SK-N-SH (cell line): ENCODE measurements at regions of chr1 and their contacts with region 1.

Region 1: GRCh38 chr1:165914136-165914798 is 86.9 kb downstream of the UCK2 start:
- DNase-seq: peak; percentile 70
- H3K4me3 ChIP-seq: no peak overlapping the region; a peak in 1 of 4 replicates
- H3K27ac ChIP-seq: no peak overlapping the region
- H3K4me1 ChIP-seq: no peaks in the 10 kb centered on the region
- H3K27me3 ChIP-seq: no peaks in the 10 kb centered on the region
- CTCF ChIP-seq: peak; percentile 97
- EP300 ChIP-seq: no peak
- RAD21 ChIP-seq: peak; percentile 99

Region 2: DNA sequence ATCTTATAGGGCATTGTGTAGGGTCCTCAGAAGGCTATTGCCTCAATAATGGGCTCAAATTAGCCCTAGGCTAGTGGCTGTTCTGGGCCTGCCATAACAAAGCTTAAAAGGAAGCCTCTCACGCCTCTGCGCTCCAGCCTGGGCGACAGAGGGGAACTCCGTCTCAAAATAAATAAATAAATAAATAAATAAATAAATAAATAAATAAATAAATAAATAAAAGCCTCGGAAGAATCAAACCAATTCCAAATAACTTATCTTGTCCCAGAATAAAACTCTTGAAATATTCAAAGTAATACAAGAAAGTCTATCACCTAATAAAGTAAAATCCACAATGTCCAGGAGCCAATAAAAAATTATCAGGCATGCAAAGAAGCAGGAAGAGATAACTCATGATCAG is 201.5 kb before region 1 on chr1:
- CTCF ChIA-PET with region 1: interaction called, 49 read pairs
- POLR2A ChIA-PET with region 1: no interaction called
- DNase-seq: no peak
- H3K4me3 ChIP-seq: no peak overlapping the region
- H3K27ac ChIP-seq: no peak overlapping the region
- H3K4me1 ChIP-seq: no peaks in the 10 kb centered on the region
- H3K27me3 ChIP-seq: no peaks in the 10 kb centered on the region; the same call in 1 of the 2 replicates
- CTCF ChIP-seq: no peak
- EP300 ChIP-seq: no peak
- RAD21 ChIP-seq: no peak

Region 3: DNA sequence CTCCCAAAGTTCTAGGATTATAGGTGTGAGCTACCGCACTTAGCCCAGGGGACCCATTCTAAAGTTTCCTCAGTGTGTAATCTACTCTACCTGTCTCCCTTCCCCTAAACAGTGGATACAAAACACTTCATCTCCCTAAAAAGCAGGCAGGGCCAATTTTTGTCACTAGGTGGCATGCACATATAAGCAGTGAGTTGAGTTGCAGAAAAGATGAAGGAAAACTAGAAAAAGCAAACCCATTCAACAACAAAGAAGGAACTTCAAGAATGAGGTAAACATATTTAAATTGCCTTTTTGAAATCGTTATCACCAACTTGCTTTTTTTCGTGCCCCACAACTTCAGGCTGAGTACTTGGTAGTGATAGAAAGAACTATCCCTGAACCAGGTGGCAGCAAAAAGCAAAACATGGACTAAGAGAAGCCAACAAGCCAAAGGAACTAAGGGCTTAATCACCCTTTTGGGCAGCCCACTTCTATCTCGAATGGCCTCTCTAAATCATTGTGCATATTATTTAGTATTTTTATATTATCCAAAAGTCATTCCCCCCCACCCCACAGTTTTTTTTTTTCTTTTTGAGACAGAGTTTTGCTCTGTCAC is 196.2 kb before region 1 on chr1:
- CTCF ChIA-PET with region 1: interaction called, 49 read pairs
- POLR2A ChIA-PET with region 1: no interaction called
- DNase-seq: peak; percentile 47
- H3K4me3 ChIP-seq: peak overlapping the region in 1 of 2 experiments; percentile 8; a peak in 1 of 4 replicates
- H3K27ac ChIP-seq: no peak overlapping the region
- H3K4me1 ChIP-seq: no peaks in the 10 kb centered on the region
- H3K27me3 ChIP-seq: no peaks in the 10 kb centered on the region
- CTCF ChIP-seq: peak; percentile 92
- EP300 ChIP-seq: no peak
- RAD21 ChIP-seq: peak; percentile 92

Region 4: GRCh38 chr1:165827268-165828102 is 86.8 kb before region 1 on chr1 and contains the start of gene UCK2:
- CTCF ChIA-PET with region 1: interaction called, 11 read pairs
- POLR2A ChIA-PET with region 1: interaction called, 4 read pairs
- DNase-seq: peak; percentile 95
- H3K4me3 ChIP-seq: peak within 1 kb of the TSS; percentile 70 to 96
- H3K27ac ChIP-seq: peak within 1 kb of the TSS; percentile 70 to 89
- H3K4me1 ChIP-seq: peaks cover 6 to 11% of the 10 kb centered on the region in 2 experiments; a peak in 3 of 4 replicates
- H3K27me3 ChIP-seq: no peaks in the 10 kb centered on the region
- CTCF ChIP-seq: no peak
- EP300 ChIP-seq: 0 out of 4 replicates have a peak, but pooled peaks of 1 of the 2 experiments have one; percentile 11
- RAD21 ChIP-seq: no peak
- polyA plus RNA-seq, gene UCK2: 50.1 and 53.7 TPM in 2 replicates

Region 5: GRCh38 chr1:165877940-165878556 is 36.2 kb before region 1 on chr1:
- CTCF ChIA-PET with region 1: no interaction called
- POLR2A ChIA-PET with region 1: no interaction called
- DNase-seq: no peak
- H3K4me3 ChIP-seq: no peak overlapping the region
- H3K27ac ChIP-seq: no peak overlapping the region
- H3K4me1 ChIP-seq: peaks cover 0 to 4% of the 10 kb centered on the region in 2 experiments; a peak in 1 of 4 replicates
- H3K27me3 ChIP-seq: no peaks in the 10 kb centered on the region
- CTCF ChIP-seq: no peak
- EP300 ChIP-seq: no peak
- RAD21 ChIP-seq: no peak

Region 6: GRCh38 chr1:165903672-165904071 is 10.6 kb before region 1 on chr1:
- CTCF ChIA-PET with region 1: interaction called, 27 read pairs
- POLR2A ChIA-PET with region 1: no interaction called
- DNase-seq: no peak
- H3K4me3 ChIP-seq: no peak overlapping the region
- H3K27ac ChIP-seq: peak overlapping the region; percentile 32 to 68
- H3K4me1 ChIP-seq: peaks cover 18 to 25% of the 10 kb centered on the region in 2 experiments; a peak in 3 of 4 replicates
- H3K27me3 ChIP-seq: no peaks in the 10 kb centered on the region
- CTCF ChIP-seq: no peak
- EP300 ChIP-seq: no peak
- RAD21 ChIP-seq: no peak

Region 7: DNA sequence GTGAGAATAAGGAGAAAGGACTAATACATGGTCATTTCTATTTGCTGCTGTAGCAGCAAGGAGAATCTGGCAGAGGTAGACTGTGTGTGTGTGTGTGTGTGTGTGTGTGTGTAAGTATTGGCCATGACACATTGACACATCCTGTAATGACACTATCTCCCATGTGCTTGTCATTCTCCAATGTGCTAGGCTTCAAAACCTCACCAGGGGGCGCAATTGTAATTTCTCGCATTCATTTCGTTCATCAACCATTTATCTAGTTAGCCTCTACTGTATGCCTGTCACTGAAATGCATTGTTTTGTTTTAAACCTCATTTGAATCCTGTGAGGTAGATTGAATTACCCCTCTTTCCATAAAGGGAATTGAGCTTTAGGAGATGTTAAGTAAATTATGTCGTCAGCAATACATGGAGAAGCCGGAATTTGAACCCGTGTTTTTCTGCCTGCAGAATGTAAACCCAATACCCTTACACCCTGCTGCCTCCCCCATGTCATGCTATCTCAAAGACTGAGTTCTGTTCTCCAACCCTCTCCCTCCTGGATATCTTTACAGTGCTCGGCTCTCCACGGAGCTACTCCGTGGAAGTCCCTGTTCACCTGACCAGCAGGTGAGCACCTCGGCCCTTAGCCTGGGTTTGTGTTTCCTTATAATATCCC is 13.9 kb after region 1 on chr1:
- CTCF ChIA-PET with region 1: interaction called, 25 read pairs
- POLR2A ChIA-PET with region 1: no interaction called
- DNase-seq: peak; percentile 62
- H3K4me3 ChIP-seq: peak overlapping the region in 1 of 2 experiments; percentile 14; a peak in 1 of 4 replicates
- H3K27ac ChIP-seq: no peak overlapping the region
- H3K4me1 ChIP-seq: no peaks in the 10 kb centered on the region
- H3K27me3 ChIP-seq: no peaks in the 10 kb centered on the region
- CTCF ChIP-seq: peak; percentile 79
- EP300 ChIP-seq: no peak
- RAD21 ChIP-seq: peak; percentile 82